Caco-2 (cell line): ENCODE measurements at regions of chr5 and their contacts with region 1.

Region 1: GRCh38 chr5:131825404-131826013 is 28.7 kb upstream of the FNIP1 start:
- DNase-seq: peak; percentile 16 to 55
- H3K4me3 ChIP-seq: no peak overlapping the region
- H3K4me3 Mint-ChIP-seq: no peak overlapping the region
- H3K27ac Mint-ChIP-seq: no peak overlapping the region
- H3K4me1 ChIP-seq: peaks cover 9% of the 10 kb centered on the region
- H3K4me1 Mint-ChIP-seq: no peaks in the 10 kb centered on the region
- H3K27me3 ChIP-seq: no peaks in the 10 kb centered on the region
- H3K27me3 Mint-ChIP-seq: peaks cover 3% of the 10 kb centered on the region
- CTCF ChIP-seq: no peak

Region 2: GRCh38 chr5:131357739-131358561 is 467.6 kb before region 1 on chr5:
- CTCF ChIA-PET with region 1: no interaction called
- POLR2A ChIA-PET with region 1: no interaction called
- intact Hi-C with region 1: no loop called
- DNase-seq: no peak
- H3K4me3 ChIP-seq: no peak overlapping the region
- H3K4me3 Mint-ChIP-seq: no peak overlapping the region
- H3K27ac Mint-ChIP-seq: no peak overlapping the region
- H3K4me1 ChIP-seq: peaks cover 8% of the 10 kb centered on the region; the same call in 1 of the 2 replicates
- H3K4me1 Mint-ChIP-seq: peaks cover 14% of the 10 kb centered on the region
- H3K27me3 ChIP-seq: no peaks in the 10 kb centered on the region
- H3K27me3 Mint-ChIP-seq: no peaks in the 10 kb centered on the region
- CTCF ChIP-seq: no peak

Region 3: GRCh38 chr5:131796793-131797693 is 28.5 kb before region 1 on chr5 and contains the start of gene FNIP1:
- CTCF ChIA-PET with region 1: no interaction called
- POLR2A ChIA-PET with region 1: interaction called, 11 read pairs
- intact Hi-C with region 1: loop called (anchors 1 kb)
- DNase-seq: peak; percentile 100
- H3K4me3 ChIP-seq: peak within 1 kb of the TSS; percentile 94
- H3K4me3 Mint-ChIP-seq: peak within 1 kb of the TSS; percentile 95
- H3K27ac Mint-ChIP-seq: peak within 1 kb of the TSS; percentile 90
- H3K4me1 ChIP-seq: peaks cover 5% of the 10 kb centered on the region
- H3K4me1 Mint-ChIP-seq: peaks cover 7% of the 10 kb centered on the region
- H3K27me3 ChIP-seq: no peaks in the 10 kb centered on the region
- H3K27me3 Mint-ChIP-seq: peaks cover 6% of the 10 kb centered on the region
- CTCF ChIP-seq: peak in 1 of 2 experiments; percentile 30
- total RNA-seq, gene FNIP1: 42.7 and 45.0 TPM in 2 replicates

Region 4: DNA sequence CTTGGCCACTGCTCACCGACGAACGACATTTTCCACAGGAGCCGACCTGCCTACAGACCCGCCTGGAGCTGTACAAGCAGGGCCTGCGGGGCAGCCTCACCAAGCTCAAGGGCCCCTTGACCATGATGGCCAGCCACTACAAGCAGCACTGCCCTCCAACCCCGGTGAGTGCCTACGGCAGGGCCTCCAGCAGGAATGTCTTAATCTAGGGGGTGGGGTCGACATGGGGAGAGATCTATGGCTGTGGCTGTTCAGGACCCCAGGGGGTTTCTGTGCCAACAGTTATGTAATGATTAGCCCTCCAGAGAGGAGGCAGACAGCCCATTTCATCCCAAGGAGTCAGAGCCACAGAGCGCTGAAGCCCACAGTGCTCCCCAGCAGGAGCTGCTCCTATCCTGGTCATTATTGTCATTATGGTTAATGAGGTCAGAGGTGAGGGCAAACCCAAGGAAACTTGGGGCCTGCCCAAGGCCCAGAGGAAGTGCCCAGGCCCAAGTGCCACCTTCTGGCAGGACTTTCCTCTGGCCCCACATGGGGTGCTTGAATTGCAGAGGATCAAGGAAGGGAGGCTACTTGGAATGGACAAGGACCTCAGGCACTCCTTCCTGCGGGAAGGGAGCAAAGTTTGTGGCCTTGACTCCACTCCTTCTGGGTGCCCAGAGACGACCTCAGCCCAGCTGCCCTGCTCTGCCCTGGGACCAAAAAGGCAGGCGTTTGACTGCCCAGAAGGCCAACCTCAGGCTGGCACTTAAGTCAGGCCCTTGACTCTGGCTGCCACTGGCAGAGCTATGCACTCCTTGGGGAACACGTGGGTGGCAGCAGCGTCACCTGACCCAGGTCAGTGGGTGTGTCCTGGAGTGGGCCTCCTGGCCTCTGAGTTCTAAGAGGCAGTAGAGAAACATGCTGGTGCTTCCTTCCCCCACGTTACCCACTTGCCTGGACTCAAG is 249.5 kb after region 1 on chr5:
- CTCF ChIA-PET with region 1: no interaction called
- POLR2A ChIA-PET with region 1: no interaction called
- intact Hi-C with region 1: no loop called
- DNase-seq: no peak
- H3K4me3 ChIP-seq: no peak overlapping the region
- H3K4me3 Mint-ChIP-seq: no peak overlapping the region
- H3K27ac Mint-ChIP-seq: no peak overlapping the region
- H3K4me1 ChIP-seq: no peaks in the 10 kb centered on the region
- H3K4me1 Mint-ChIP-seq: no peaks in the 10 kb centered on the region
- H3K27me3 ChIP-seq: no peaks in the 10 kb centered on the region
- H3K27me3 Mint-ChIP-seq: no peaks in the 10 kb centered on the region
- CTCF ChIP-seq: no peak